ENCODE measurements at regions of chr3 and their contacts with region 1.

Region 1: DNA sequence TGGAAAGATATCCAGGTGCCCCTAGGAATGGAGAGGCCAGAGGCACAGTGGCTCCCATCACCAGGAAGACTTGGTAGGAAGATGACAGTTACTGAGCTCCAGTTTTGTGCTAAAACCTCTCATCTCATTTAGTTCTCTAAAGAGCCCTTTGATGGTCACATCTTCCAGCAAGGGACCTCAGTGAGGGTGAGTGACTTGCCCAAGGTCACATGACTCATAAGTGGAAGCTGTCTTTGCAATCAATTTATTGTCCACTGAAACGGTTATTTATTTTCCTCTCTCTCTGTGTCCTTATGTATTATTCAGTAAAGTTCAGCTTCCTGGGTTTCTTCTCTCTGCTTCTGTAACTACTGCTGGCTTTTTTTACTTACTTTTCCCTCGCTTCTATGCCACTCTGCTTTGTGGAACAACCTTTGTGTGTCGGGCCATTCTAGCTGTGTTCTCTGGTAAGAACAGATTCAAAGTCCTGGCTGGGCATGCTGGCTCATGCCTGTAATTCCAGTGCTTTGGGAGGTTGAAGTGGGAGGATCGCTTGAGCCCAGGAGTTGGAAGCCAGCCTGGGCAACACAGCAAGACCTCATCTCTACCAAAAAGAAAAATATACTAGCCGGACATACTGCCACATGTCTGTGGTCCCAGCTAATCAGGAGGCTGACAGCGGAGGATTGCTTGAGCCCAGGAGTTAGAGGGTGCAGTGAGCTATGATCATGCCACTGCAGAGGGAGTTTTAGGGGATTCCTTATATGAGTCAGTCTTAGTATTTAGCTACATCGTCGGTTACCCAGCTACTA is 55.9 kb downstream of the PDIA5 start:
- DNase-seq: no peak
- H3K4me3 ChIP-seq: no peak overlapping the region
- H3K27ac ChIP-seq: no peak overlapping the region
- H3K4me1 ChIP-seq: no peaks in the 10 kb centered on the region
- H3K27me3 ChIP-seq: no peaks in the 10 kb centered on the region
- CTCF ChIP-seq: no peak
- POLR2A ChIP-seq: no peak

Region 2: GRCh38 chr3:123085293-123085931 is 37.3 kb before region 1 on chr3:
- intact Hi-C with region 1: loop called (anchors 1 kb)
- DNase-seq: no peak
- H3K4me3 ChIP-seq: no peak overlapping the region
- H3K27ac ChIP-seq: peak overlapping the region in 1 of 2 donors; percentile 22
- H3K4me1 ChIP-seq: peaks cover 0 to 11% of the 10 kb centered on the region in 2 donors
- H3K27me3 ChIP-seq: no peaks in the 10 kb centered on the region
- CTCF ChIP-seq: no peak
- POLR2A ChIP-seq: no peak

Region 3: GRCh38 chr3:123161167-123161566 is 38.4 kb after region 1 on chr3:
- intact Hi-C with region 1: loop called (anchors 1 kb)
- DNase-seq: no peak
- H3K4me3 ChIP-seq: no peak overlapping the region
- H3K27ac ChIP-seq: no peak overlapping the region
- H3K4me1 ChIP-seq: no peaks in the 10 kb centered on the region
- H3K27me3 ChIP-seq: no peaks in the 10 kb centered on the region
- CTCF ChIP-seq: no peak
- POLR2A ChIP-seq: no peak